Psoas muscle (tissue), 8 donors: ENCODE measurements at regions of chr7 and their contacts with region 1.

Region 1: DNA sequence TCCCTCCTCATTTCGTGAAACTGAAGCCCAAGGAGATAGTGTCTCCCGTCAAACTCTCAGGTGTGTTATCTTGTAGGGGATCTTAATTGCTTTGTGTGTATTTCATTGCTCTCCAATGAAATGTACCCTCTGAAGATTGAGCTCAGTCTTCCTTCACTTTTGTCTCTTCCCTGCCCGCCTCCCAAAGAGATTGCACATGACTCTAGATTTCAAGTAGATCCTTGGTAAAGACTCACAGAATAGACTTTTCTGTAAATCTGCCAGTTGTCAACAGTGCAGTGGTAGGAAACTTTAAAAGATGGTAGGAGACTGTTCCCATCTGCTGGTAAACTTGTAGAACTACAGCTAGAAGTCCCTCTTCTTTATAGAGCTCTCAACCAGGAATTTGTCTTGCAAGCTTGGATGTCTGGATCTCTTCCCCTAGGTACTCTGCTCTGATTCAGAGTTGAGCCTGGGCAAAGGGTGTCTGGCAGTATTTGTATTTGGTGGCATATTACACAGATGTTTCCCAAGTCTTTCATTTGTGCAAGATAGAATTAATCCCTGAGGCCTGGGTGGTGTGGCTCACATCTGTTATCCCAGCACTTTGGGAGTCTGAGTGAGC is 9.6 kb downstream of the CCL26 start:
- DNase-seq: no peak
- ATAC-seq: peak; percentile 76 to 87 (median 80)
- H3K4me3 ChIP-seq: no peak overlapping the region
- H3K27ac ChIP-seq: no peak overlapping the region
- H3K4me1 ChIP-seq: no peaks in the 10 kb centered on the region
- H3K27me3 ChIP-seq: no peaks in the 10 kb centered on the region
- CTCF ChIP-seq: peak; percentile 76

Region 2: DNA sequence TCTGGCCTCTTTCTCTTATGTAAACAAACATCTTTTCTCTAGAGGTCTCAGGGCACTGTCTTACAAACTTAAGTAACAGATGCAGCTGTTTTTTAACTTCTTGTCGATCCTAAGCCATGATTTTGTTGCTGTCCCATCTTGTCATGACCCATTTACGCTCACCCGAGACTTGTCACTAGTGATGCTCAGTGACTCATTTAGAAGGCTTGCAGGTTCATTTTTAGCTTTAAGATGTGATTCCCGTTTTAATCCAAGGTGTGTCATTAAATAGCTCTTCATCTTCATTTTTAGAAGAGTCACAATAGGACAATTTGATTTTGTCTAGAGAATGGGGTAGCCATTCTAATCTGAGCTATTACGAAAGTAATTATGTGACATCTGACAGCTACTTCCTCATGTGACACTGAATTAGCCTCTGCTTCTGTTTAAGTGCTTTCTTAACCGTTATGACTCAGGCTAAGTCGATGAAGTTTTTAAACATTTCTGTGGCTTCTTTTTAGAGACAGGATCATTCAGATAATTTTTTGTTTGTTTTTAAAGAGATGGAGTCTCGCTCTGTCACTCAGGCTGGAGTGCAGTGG is 227.6 kb before region 1 on chr7:
- intact Hi-C with region 1: loop called in 1 of 2 experiments (anchors 10 kb)
- DNase-seq: no peak
- ATAC-seq: no peak
- H3K4me3 ChIP-seq: no peak overlapping the region
- H3K27ac ChIP-seq: no peak overlapping the region
- H3K4me1 ChIP-seq: peaks cover 13% of the 10 kb centered on the region
- H3K27me3 ChIP-seq: no peaks in the 10 kb centered on the region
- CTCF ChIP-seq: no peak

Region 3: DNA sequence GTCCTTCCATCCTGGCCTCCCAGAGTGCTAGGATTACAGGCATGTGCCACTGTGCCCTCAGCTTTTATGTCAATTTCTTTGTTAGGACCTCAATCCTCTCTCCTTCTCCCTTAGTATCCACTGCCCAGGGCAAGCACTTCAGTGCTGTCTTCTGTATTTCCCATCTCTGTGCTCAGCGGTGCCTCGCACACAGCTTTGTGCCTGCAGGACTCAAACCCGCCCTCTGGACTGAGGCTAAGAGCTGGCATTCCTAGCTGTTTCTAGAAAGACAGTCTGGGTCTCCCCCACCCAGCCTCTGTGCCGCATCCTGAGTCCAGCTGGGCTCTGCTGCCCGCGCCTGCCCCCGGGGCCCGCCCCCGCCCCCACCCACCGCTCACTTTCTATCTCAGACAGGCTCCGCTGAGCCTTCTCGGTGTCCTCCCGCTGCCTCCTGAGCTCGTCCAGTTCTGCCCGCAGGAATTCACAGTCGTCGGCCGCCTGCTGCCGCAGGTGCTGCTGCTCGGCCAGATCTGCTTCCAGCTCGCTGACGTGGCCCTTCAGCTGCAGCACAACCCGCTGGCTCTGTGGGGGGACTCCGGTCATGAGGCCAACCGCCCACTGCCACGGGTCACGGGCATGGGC is 203.0 kb before region 1 on chr7:
- intact Hi-C with region 1: loop called in 1 of 2 experiments (anchors 10 kb)
- DNase-seq: peak in 1 of 2 donors; percentile 47
- ATAC-seq: no peak
- H3K4me3 ChIP-seq: no peak overlapping the region
- H3K27ac ChIP-seq: no peak overlapping the region
- H3K4me1 ChIP-seq: no peaks in the 10 kb centered on the region
- H3K27me3 ChIP-seq: no peaks in the 10 kb centered on the region
- CTCF ChIP-seq: no peak

Region 4: GRCh38 chr7:75575488-75576121 is 186.8 kb before region 1 on chr7:
- intact Hi-C with region 1: loop called in 1 of 2 experiments (anchors 10 kb)
- DNase-seq: no peak
- ATAC-seq: no peak
- H3K4me3 ChIP-seq: no peak overlapping the region
- H3K27ac ChIP-seq: no peak overlapping the region
- H3K4me1 ChIP-seq: no peaks in the 10 kb centered on the region
- H3K27me3 ChIP-seq: no peaks in the 10 kb centered on the region
- CTCF ChIP-seq: no peak